GM12878 (cell line): ENCODE measurements at regions of chr6 and their contacts with region 1.

Region 1: DNA sequence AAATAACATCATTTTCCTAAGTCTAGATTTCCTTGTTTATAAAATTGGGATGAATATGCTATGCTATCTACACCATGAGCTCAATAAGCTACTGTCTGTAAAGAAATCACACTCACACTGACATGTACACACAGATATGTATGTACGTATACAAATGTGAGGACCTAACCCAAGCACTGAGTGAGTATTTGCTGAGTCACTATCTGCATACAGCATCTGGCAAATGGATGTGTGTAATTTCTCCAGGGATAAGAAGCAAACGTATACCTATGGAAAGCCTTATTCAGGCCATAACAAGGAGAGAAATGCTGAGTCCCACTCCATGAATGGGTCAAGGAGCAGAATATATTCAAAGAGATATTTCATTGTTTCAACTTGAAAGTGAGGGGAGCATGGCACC is 153.9 kb downstream of the LPA start:
- DNase-seq: no peak
- ATAC-seq: no peak
- H3K4me3 ChIP-seq: no peak overlapping the region
- H3K27ac ChIP-seq: no peak overlapping the region
- H3K4me1 ChIP-seq: no peaks in the 10 kb centered on the region
- H3K27me3 ChIP-seq: no peaks in the 10 kb centered on the region; a peak in 1 of 4 replicates
- CTCF ChIP-seq: no peak
- EP300 ChIP-seq: no peak
- POLR2A ChIP-seq: no peak
- RAD21 ChIP-seq: no peak

Region 2: GRCh38 chr6:160520043-160520904 is 10.1 kb after region 1 on chr6:
- CTCF ChIA-PET with region 1: interaction called, 13 read pairs
- POLR2A ChIA-PET with region 1: no interaction called
- RAD21 ChIA-PET with region 1: no interaction called
- SMC1A ChIA-PET with region 1: interaction called, 5 read pairs
- in situ Hi-C with region 1: no loop called
- intact Hi-C with region 1: no loop called
- DNase-seq: no peak
- ATAC-seq: peak; percentile 89
- H3K4me3 ChIP-seq: peak overlapping the region; percentile 69; the same call in 1 of the 2 replicates
- H3K27ac ChIP-seq: no peak overlapping the region
- H3K4me1 ChIP-seq: no peaks in the 10 kb centered on the region
- H3K27me3 ChIP-seq: no peaks in the 10 kb centered on the region
- CTCF ChIP-seq: peak in 1 of 3 experiments; percentile 92; a peak in 4 of 6 replicates
- EP300 ChIP-seq: no peak
- POLR2A ChIP-seq: no peak
- RAD21 ChIP-seq: peak; percentile 74